Stomach (tissue), 19 donors: ENCODE measurements at regions of chr12 and their contacts with region 1.

Region 1: DNA sequence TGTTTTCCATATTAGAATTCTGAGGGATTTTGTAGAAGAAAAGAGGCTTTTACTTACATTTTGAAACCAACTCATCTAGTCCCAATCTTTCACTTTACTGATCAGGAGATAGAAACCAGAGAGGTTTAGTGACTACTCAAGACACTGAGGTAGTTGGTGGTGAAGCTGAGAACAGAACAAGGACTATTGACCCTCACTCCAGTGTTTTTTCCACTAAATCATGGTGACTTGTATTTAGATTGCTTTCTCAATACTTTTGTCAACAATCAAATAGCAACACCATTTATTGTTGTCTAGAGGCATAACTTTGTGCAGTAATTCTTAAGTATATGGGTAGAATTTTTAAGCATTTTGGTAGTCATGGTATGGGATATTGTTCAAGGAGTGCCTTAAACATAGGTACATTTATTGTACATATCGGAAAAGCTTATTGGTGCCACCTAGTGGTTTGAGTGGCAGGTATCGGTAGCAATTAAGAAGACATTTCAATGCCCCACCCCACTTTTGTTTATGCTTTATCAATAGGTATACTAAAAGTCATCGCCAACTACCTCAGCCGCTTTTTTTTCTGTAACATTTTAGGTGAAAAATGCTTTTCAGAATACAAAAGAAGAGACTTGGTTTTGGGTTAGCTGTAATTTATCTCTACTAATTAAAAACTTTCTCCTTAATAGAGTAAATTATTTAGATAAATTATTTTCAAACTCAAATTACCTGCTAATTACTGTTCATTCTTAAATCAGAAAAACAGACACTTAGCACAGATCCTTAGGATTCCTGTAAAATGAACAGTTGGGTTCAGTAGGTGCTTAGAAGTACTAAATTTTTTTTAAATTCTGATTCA is 47.3 kb upstream of the PAWR start:
- DNase-seq: peak; percentile 42 to 80
- H3K4me3 ChIP-seq: no peak overlapping the region
- H3K27ac ChIP-seq: no peak overlapping the region
- H3K4me1 ChIP-seq: no peaks in the 10 kb centered on the region
- H3K27me3 ChIP-seq: no peaks in the 10 kb centered on the region
- CTCF ChIP-seq: peak in 5 of 7 experiments; percentile 35 to 70 (median 59)
- EP300 ChIP-seq: no peak
- POLR2A ChIP-seq: no peak

Region 2: DNA sequence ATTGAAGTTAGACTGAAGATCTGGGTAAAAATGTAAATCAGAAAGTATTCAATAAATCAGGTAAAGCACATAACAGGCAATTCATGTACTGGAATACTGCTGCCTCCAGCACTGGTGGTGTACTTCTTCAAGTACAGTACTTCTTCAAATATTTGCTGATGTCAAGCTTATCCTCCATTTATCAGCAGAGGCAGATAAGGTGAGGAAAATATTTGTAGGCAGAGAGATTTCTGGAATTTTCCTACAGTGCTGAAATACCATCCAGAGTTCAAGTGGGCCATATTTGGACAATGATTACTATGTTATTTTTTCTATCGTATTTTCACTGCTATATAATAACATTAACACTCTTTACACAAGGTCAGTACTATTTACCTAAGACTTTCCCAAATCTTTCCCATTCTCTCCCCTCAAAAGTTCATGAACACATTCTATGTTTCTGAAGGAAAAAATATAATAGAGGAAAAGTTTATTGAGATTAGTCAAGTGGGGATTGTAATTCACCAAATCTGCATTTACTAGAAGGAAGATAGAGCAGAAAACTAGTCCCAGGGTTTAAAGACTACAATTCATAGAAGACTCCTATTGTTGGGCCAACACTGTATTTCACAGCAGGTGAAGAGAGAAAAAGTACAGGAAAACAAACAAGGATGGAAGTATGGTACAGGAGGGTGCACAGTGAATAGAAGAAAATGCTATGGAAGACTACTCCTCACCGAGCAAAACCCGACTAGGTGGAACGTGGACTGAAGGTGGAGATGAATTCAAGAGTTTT is 188.4 kb before region 1 on chr12:
- intact Hi-C with region 1: loop called (anchors 5 kb)
- DNase-seq: peak in 1 of 2 donors; percentile 53
- H3K4me3 ChIP-seq: no peak overlapping the region
- H3K27ac ChIP-seq: peak overlapping the region in 1 of 5 donors; percentile 4
- H3K4me1 ChIP-seq: peaks cover 20 to 49% (median 28%) of the 10 kb centered on the region in 4 donors
- H3K27me3 ChIP-seq: no peaks in the 10 kb centered on the region
- CTCF ChIP-seq: no peak
- EP300 ChIP-seq: no peak
- POLR2A ChIP-seq: no peak